HepG2 (cell line): ENCODE measurements at regions of chr3 and their contacts with region 1.

Region 1: DNA sequence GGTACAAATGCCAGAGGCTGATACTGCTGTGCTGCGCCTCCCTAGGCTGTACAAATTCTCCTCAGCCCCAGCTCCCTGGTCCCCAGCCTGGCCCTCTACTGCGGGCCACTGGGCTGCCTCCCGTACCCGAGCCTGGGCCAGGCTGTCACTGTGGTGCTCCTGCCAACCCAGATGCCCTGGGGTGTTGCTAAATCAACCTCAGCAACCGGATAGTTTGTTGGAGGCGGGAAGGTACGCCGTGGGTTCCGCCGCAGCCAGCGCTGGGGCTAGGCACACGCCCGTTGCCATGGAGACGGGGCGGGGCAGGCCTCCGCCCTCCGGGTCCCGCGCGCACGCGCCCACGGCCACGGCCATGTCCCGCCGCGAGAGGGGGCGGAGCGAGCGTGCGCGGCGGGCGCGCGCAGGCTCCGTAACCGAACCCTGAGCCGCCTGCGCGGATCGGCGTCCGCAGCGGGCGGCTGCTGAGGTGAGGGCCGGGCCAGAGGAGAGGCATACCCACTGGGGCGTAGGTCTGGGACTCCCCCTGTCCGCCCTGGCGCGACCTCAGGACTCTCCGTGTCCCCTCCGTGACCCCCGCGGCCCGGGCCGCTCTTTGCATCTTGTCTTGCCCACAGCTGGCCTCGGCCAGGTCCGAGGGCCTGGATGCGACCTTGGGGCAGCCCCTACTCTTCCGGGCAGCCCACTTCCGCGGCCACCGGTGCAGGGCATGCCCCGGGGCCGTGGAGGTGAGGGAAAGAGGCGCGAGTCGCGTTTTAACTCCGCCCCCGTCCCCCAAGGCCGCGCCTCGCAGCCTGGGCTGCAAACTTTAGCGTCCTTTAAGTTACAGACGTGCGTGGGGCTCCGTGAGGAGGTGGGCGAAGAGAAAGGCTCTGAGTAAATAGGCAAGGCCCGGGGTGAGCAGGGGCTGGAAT is at the start of gene TEX264:
- DNase-seq: peak; percentile 59
- ATAC-seq: peak; percentile 76
- H3K4me3 ChIP-seq: peak within 1 kb of the TSS; percentile 79 to 99 (median 80)
- H3K27ac ChIP-seq: peak within 1 kb of the TSS; percentile 89
- H3K4me1 ChIP-seq: peaks cover 44% of the 10 kb centered on the region
- H3K27me3 ChIP-seq: no peaks in the 10 kb centered on the region
- CTCF ChIP-seq: 0 out of 2 replicates have a peak, but pooled peaks have one; percentile 6
- EP300 ChIP-seq: no peak
- POLR2A ChIP-seq: peak; percentile 76 to 89
- RAD21 ChIP-seq: peak; percentile 43; the same call in 1 of the 2 replicates
- total RNA-seq, gene TEX264: 18.8 and 35.2 TPM in 2 replicates

Region 2: DNA sequence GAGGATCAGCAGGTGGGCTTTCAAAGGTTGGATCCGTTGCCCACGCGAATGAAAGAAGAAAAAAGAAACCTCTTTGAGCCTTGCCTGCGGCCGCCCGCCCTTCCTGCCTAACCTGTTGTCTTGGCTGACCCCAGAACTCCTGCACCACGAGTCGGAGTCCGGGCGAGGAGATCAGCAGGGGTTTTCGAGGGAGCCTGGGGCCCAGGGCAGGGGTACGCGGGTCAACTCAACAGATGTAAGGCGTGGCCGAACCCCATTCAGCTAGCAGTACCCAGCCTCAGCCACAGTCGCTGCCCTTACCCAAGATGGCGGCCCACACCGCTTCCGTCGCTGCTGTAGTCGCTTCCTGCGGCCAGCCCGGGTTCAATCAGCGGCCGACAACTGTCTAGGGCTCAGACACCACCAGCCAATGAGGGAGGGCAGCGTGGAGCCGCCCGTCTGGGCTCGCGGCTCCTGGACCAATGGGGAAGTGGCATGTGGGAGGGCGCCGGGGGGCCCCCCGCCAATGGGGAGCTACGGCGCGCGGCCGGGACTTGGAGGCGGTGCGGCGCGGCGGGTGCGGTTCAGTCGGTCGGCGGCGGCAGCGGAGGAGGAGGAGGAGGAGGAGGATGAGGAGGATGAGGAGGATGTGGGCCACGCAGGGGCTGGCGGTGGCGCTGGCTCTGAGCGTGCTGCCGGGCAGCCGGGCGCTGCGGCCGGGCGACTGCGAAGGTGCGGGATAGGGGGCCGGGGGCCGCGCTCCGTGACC is 286.2 kb before region 1 on chr3 and contains the start of gene MANF:
- CTCF ChIA-PET with region 1: no interaction called
- POLR2A ChIA-PET with region 1: interaction called, 7 read pairs
- in situ Hi-C with region 1: no loop called
- intact Hi-C with region 1: loop called (anchors 10 kb)
- DNase-seq: peak; percentile 96
- ATAC-seq: peak; percentile 94
- H3K4me3 ChIP-seq: peak within 1 kb of the TSS; percentile 90 to 95 (median 92)
- H3K27ac ChIP-seq: peak within 1 kb of the TSS; percentile 96
- H3K4me1 ChIP-seq: peaks cover 55% of the 10 kb centered on the region
- H3K27me3 ChIP-seq: peaks cover 0 to 1% of the 10 kb centered on the region in 2 experiments; a peak in 1 of 5 replicates
- CTCF ChIP-seq: peak; percentile 2; the same call in 1 of the 2 replicates
- EP300 ChIP-seq: no peak
- POLR2A ChIP-seq: peak in 1 of 2 experiments; percentile 85; a peak in 2 of 4 replicates
- RAD21 ChIP-seq: peak; percentile 25; the same call in 1 of the 2 replicates
- total RNA-seq, gene MANF: 111 and 269 TPM in 2 replicates